ENCODE measurements at regions of chr4 and their contacts with region 1.

Region 1: GRCh38 chr4:40309250-40309774 is 25.8 kb upstream of the CHRNA9 start:
- DNase-seq: peak; percentile 92
- ATAC-seq: peak; percentile 65
- H3K4me3 ChIP-seq: peak overlapping the region; percentile 59
- H3K27ac ChIP-seq: peak overlapping the region; percentile 76
- H3K4me1 ChIP-seq: peaks cover 58% of the 10 kb centered on the region
- H3K27me3 ChIP-seq: no peaks in the 10 kb centered on the region
- CTCF ChIP-seq: peak; percentile 87 to 90 (median 89)
- EP300 ChIP-seq: peak; percentile 68 to 90; a peak in 3 of 4 replicates
- POLR2A ChIP-seq: peak; percentile 49
- RAD21 ChIP-seq: peak; percentile 85

Region 2: DNA sequence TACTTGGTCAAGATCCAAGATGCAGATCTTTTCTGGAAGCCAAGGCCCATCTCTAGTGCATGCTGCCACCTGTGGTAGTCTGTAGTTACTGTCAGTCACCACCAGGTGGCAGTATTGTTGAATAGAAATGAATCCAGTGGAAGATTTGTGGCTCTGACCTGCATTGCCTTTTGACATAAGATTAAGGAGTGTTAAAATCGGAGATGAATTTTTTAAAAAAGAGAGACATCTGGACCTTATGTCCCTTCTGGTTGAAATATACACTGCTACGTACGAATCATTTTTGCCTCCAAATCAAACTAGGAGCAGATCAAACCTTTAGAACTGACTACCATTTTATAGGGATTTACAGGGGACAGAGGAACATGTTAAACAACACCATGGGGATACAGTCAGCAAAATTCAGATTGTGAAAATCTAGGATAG is 159.3 kb before region 1 on chr4:
- CTCF ChIA-PET with region 1: interaction called, 40 read pairs
- POLR2A ChIA-PET with region 1: interaction called, 7 read pairs
- RAD21 ChIA-PET with region 1: interaction called, 24 read pairs
- SMC1A ChIA-PET with region 1: interaction called, 56 read pairs
- in situ Hi-C with region 1: loop called (anchors 5 kb)
- intact Hi-C with region 1: loop called (anchors 1 kb)
- DNase-seq: peak; percentile 79
- ATAC-seq: peak; percentile 95
- H3K4me3 ChIP-seq: no peak overlapping the region
- H3K27ac ChIP-seq: no peak overlapping the region
- H3K4me1 ChIP-seq: no peaks in the 10 kb centered on the region
- H3K27me3 ChIP-seq: no peaks in the 10 kb centered on the region
- CTCF ChIP-seq: peak; percentile 72 to 85 (median 73)
- EP300 ChIP-seq: no peak
- POLR2A ChIP-seq: no peak
- RAD21 ChIP-seq: peak; percentile 95

Region 3: DNA sequence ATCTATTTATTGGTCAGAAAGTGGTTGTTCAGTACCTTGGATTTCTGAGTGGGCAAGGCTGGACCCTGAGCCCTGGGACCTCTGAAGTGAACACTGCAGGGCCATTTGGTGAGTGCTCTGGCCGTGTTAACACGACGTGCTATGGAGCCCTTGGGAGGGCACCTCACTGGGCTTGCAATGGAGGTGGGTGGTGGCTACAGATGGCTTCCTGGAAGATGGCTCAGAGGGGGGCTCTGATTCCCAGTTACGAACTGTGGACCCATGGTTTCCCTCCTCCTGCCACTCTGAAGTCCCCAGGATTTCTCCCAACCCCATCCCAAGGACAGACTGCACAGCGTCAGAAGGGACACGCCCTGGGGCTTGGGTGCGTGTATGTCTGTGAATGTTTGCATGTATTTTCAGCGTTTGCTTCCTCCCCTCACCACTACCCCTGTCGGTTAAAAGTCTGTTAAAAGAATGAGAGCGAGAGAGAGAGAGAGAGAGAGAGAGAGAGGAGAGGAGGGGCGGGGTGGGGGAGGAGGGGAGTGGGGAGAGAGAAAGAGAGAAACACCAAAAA is 116.2 kb before region 1 on chr4:
- CTCF ChIA-PET with region 1: interaction called, 121 read pairs
- POLR2A ChIA-PET with region 1: interaction called, 33 read pairs
- RAD21 ChIA-PET with region 1: interaction called, 356 read pairs
- SMC1A ChIA-PET with region 1: interaction called, 374 read pairs
- in situ Hi-C with region 1: no loop called
- intact Hi-C with region 1: no loop called
- DNase-seq: no peak
- ATAC-seq: peak; percentile 40
- H3K4me3 ChIP-seq: peak overlapping the region; percentile 88
- H3K27ac ChIP-seq: peak overlapping the region; percentile 92
- H3K4me1 ChIP-seq: peaks cover 9% of the 10 kb centered on the region
- H3K27me3 ChIP-seq: no peaks in the 10 kb centered on the region
- CTCF ChIP-seq: 0 out of 6 replicates have a peak, but pooled peaks of 1 of the 3 experiments have one; percentile 3
- EP300 ChIP-seq: 0 out of 4 replicates have a peak, but pooled peaks of 1 of the 2 experiments have one; percentile 25
- POLR2A ChIP-seq: peak; percentile 81
- RAD21 ChIP-seq: peak; percentile 17; the same call in 1 of the 2 replicates

Region 4: DNA sequence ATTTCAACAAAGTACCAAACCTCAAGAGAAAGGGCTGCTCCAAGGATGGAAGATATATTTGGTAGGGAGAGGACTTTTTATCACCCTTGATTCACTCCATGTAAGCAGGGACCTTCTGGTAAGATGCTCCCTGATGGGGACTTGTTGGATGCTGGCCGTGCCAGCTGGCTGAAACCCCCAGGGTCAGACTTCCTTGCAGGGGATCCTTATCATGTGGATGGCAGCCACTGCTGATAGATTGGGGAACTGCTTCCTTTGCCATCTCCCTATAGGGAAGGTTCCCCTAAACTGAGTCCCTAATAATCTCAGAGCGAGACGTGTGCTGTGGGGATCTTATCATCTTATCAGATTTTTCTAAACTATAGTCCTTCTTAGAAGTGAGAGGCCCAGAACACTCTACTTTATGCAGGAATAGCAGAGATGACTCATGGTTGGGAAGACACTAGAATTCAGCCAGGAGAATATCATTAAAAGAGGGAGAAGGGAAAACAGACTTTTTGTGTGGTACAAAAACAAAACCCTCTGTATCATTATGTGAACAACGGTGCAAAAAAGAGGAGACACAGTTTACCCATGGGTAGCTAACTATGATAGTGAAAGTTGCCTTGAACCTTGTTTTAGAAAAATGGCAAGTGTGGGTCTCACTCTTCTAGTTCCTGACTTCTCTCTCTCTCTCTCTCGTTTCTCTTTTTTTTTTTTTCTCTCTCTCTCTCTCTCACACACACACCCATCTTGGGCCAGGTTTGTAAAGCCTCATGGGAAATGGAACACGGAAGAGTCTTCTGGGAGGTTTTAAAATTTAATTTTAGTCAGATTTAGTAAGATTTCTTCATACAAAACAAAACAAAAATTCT is 96.4 kb before region 1 on chr4:
- CTCF ChIA-PET with region 1: interaction called, 53 read pairs
- POLR2A ChIA-PET with region 1: interaction called, 24 read pairs
- RAD21 ChIA-PET with region 1: interaction called, 100 read pairs
- SMC1A ChIA-PET with region 1: interaction called, 110 read pairs
- in situ Hi-C with region 1: no loop called
- intact Hi-C with region 1: no loop called
- DNase-seq: no peak
- ATAC-seq: peak; percentile 10
- H3K4me3 ChIP-seq: peak overlapping the region; percentile 57; the same call in 1 of the 2 replicates
- H3K27ac ChIP-seq: peak overlapping the region; percentile 27
- H3K4me1 ChIP-seq: peaks cover 45% of the 10 kb centered on the region
- H3K27me3 ChIP-seq: no peaks in the 10 kb centered on the region
- CTCF ChIP-seq: no peak
- EP300 ChIP-seq: no peak
- POLR2A ChIP-seq: no peak
- RAD21 ChIP-seq: no peak

Region 5: DNA sequence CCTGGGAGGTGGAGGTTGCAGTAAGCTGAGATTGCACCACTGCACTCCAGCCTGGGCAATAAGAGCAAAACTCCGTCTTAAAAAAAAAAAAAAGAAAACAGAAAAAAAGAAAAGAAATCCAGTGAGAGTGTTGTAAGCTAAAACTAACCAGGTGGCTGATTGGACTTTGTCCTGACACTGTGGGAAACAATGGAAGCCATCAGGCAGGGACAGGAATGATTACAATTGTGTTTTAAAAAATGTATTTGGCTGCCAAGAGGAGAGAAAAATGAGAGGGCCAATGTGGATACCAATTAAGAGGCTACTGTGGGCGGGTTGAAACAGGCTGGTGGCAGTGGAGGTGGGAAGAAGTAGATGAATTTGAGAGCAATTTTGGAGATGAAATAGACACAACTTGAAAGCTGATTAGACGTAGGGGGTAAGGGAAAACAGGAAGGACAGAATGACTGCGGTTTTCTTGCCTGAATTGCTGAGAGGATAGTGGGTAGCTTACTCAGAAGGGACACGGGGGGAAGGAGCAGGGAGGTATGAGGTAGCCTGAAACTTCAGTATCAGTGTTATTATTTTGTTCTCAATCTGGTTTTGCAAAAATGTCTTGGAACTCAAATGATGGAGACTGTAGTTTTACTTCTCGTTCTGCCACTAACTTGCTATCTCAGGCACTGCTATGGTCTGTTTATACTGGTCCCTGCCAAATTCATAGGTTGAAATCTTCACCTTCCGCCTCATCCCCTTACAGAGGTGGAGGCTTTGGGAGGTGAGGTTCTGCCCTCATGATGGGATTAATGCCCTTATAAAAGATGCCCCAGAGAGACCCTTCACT is 19.7 kb before region 1 on chr4:
- CTCF ChIA-PET with region 1: interaction called, 6 read pairs
- POLR2A ChIA-PET with region 1: interaction called, 4 read pairs
- RAD21 ChIA-PET with region 1: interaction called, 5 read pairs
- SMC1A ChIA-PET with region 1: interaction called, 12 read pairs
- in situ Hi-C with region 1: no loop called
- intact Hi-C with region 1: no loop called
- DNase-seq: no peak
- ATAC-seq: peak; percentile 90
- H3K4me3 ChIP-seq: no peak overlapping the region
- H3K27ac ChIP-seq: no peak overlapping the region; the same call in 1 of the 2 replicates
- H3K4me1 ChIP-seq: peaks cover 12% of the 10 kb centered on the region
- H3K27me3 ChIP-seq: no peaks in the 10 kb centered on the region
- CTCF ChIP-seq: no peak
- EP300 ChIP-seq: no peak
- POLR2A ChIP-seq: no peak
- RAD21 ChIP-seq: 0 out of 2 replicates have a peak, but pooled peaks have one; percentile 3

Measured in GM12878 (cell line).